ENCODE measurements at regions of chr19 and their contacts with region 1.

Region 1: DNA sequence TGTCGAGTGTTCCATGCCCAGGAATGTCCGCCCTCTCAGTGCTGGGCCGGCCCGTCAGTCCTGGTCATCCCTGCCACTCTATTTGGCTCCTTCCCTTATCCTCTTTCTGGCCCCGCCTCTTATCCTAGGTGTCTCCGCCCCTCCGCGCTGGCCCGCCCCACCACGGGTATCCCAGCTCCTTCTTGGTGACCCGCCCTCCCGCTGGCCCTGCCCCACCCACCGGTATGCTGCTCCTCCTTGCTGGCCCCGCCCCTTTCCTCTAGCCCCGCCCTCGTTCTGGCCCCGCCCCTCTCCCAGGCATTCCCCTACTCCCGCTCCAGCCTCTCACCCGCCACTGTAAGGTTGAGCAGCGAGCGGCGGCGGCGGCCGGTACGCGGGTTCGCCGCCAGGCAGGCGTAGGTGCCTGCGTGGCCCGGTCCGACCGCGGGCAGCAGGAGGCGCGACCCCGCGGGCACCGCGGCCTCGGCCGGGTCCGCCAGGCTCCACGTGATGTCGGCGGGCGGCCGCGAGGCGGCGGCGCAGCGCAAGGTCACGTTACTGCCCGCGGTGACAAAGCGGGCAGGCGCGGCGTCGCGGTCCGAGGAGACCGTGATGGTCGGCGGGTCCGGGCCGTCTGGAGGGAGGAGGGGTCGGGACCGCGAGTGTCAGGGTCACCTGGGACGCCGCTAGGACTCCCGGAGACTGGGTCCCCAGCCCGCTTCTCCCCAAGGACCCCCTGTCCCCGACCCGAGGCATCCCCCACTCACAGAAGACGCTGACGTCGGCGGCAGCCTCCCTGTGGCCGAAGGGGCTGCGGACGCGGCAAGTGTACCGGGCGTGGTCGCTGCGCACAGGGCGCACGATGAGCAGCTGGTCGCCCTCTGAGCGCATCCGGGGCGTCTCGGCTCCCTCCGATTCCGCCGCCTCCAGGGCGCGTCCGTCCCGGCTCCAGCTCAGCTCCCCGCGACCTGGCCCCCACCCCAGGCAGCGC is 2.0 kb downstream of the VSIG10L start:
- DNase-seq: peak; percentile 92 to 96
- H3K4me3 ChIP-seq: peak overlapping the region in 1 of 3 donors; percentile 38
- H3K27ac ChIP-seq: peak overlapping the region in 2 of 3 donors; percentile 23 to 61
- H3K4me1 ChIP-seq: peaks cover 9 to 14% of the 10 kb centered on the region in 2 donors
- H3K27me3 ChIP-seq: no peaks in the 10 kb centered on the region
- CTCF ChIP-seq: peak in 3 of 6 experiments; percentile 21 to 36 (median 32)
- POLR2A ChIP-seq: peak in 1 of 2 donors; percentile 59

Region 2: GRCh38 chr19:51393959-51394836 is 54.2 kb after region 1 on chr19:
- intact Hi-C with region 1: loop called (anchors 10 kb)
- DNase-seq: peak; percentile 93
- H3K4me3 ChIP-seq: peak overlapping the region in 2 of 3 donors; percentile 13 to 15
- H3K27ac ChIP-seq: peak overlapping the region; percentile 51 to 72 (median 64)
- H3K4me1 ChIP-seq: peaks cover 5 to 10% of the 10 kb centered on the region in 2 donors
- H3K27me3 ChIP-seq: no peaks in the 10 kb centered on the region
- CTCF ChIP-seq: no peak
- POLR2A ChIP-seq: peak in 1 of 2 donors; percentile 43

Measured in thyroid gland (tissue), 4 donors.